Pancreas (tissue), 10 donors: ENCODE measurements at regions of chr14 and their contacts with region 1.

Region 1: DNA sequence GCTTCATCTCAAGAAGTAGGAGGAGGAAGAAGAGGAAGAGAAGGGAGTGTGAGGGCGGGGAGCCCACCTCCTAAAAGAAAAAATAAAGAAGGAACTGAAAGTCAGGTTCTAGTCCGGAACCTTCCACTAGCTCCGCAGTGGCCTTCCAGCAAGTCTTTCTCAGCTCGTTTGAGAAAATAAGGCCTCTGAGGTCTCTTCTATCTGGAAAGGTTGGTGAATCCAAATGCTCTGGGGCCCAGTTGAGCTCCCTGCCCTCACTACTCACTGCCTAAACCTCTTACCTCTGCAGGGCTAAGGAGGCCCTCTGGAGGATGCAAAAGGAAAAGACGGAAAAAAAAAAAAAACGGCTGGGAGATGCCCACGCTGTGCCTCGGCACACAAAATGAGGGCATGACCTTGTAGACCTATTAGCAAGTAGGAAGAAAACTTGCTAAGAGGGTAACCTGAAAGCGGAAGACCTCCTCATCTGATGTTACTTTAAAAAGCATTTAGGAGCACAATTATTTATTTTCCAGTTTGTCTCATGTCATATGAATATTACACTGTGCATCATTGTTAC is 35.9 kb downstream of the FBLN5 start:
- DNase-seq: peak in 4 of 6 donors; percentile 37 to 57 (median 54)
- ATAC-seq: peak; percentile 86 to 94 (median 92)
- H3K4me3 ChIP-seq: no peak overlapping the region
- H3K27ac ChIP-seq: peak overlapping the region in 2 of 4 donors; percentile 20 to 38
- H3K4me1 ChIP-seq: peaks cover 4 to 13% (median 4%) of the 10 kb centered on the region in 3 donors
- H3K27me3 ChIP-seq: no peaks in the 10 kb centered on the region
- CTCF ChIP-seq: peak in 2 of 4 donors; percentile 20 to 32

Region 2: DNA sequence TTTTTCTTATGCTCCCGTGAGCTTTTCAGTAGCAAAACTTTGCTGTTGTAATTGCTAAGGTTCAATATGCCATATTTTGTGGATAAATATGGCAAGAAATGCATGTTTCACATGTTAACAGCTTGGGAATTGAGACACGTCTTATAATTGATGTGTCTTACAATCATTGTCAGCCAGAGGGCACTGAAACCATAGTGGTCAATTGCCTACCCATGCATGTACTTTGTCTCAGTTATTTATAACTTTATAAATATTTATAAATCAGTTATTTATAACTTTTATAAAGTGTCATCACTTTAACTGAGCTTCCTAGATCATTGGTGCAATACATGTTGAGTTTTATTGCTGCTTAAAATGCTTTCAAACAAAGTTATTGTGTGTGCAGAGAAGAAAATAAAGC is 261.6 kb before region 1 on chr14:
- intact Hi-C with region 1: loop called in 1 of 3 experiments (anchors 5 kb)
- DNase-seq: peak in 1 of 6 donors; percentile 19
- ATAC-seq: peak in 2 of 4 donors; percentile 55 to 72
- H3K4me3 ChIP-seq: no peak overlapping the region
- H3K27ac ChIP-seq: no peak overlapping the region
- H3K4me1 ChIP-seq: peaks cover 0 to 21% (median 0%) of the 10 kb centered on the region in 3 donors
- H3K27me3 ChIP-seq: no peaks in the 10 kb centered on the region
- CTCF ChIP-seq: peak in 1 of 4 donors; percentile 27